ENCODE measurements at regions of chr4 and their contacts with region 1.

Region 1: GRCh38 chr4:89836897-89837384 is at the start of gene SNCA:
- DNase-seq: peak; percentile 11 to 45 (median 22)
- ATAC-seq: peak; percentile 82
- H3K4me3 ChIP-seq: peak within 1 kb of the TSS; percentile 40
- H3K27ac ChIP-seq: no peak within 1 kb of the TSS
- H3K4me1 ChIP-seq: peaks cover 0 to 8% of the 10 kb centered on the region in 2 experiments; a peak in 2 of 5 replicates
- H3K27me3 ChIP-seq: no peaks in the 10 kb centered on the region
- CTCF ChIP-seq: no peak
- EP300 ChIP-seq: no peak
- POLR2A ChIP-seq: no peak
- RAD21 ChIP-seq: no peak
- polyA plus RNA-seq, gene SNCA: 2.5 TPM

Region 2: DNA sequence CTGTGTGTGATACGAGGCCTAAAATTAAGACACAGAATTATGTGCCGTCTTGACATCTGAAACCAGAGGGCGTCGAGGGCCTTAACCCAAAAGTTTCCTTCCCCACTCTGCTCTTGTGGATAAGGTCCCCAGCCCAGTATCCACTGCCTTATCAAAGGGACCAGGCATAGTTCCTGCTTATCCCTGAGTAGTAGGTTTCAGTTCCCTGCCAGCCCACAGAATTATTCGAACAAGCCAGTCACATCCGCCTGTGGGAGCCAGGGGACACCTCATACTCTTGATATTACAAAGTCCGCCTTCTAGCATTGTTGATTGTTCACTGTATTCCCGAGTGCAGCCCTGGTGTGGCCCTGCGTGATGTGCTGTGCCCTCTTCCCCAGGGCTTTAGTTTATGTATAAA is 52.3 kb after region 1 on chr4:
- CTCF ChIA-PET with region 1: no interaction called
- POLR2A ChIA-PET with region 1: no interaction called
- in situ Hi-C with region 1: no loop called
- intact Hi-C with region 1: loop called (anchors 5 kb)
- DNase-seq: peak; percentile 37 to 81 (median 51)
- ATAC-seq: peak; percentile 96
- H3K4me3 ChIP-seq: no peak overlapping the region
- H3K27ac ChIP-seq: peak overlapping the region; percentile 63
- H3K4me1 ChIP-seq: no peaks in the 10 kb centered on the region
- H3K27me3 ChIP-seq: no peaks in the 10 kb centered on the region
- CTCF ChIP-seq: 0 out of 6 replicates have a peak, but pooled peaks of 1 of the 3 experiments have one; percentile 8
- EP300 ChIP-seq: peak; percentile 72; the same call in 1 of the 2 replicates
- POLR2A ChIP-seq: no peak
- RAD21 ChIP-seq: no peak